Transverse colon (tissue), 4 donors: ENCODE measurements at regions of chr15 and their contacts with region 1.

Region 1: GRCh38 chr15:71730277-71731144 is 79.8 kb upstream of the NR2E3 start:
- DNase-seq: peak; percentile 44
- H3K4me3 ChIP-seq: no peak overlapping the region
- H3K27ac ChIP-seq: no peak overlapping the region
- H3K4me1 ChIP-seq: peaks cover 0 to 31% (median 7%) of the 10 kb centered on the region in 4 donors
- H3K27me3 ChIP-seq: no peaks in the 10 kb centered on the region
- CTCF ChIP-seq: peak; percentile 69 to 82 (median 75)
- EP300 ChIP-seq: no peak
- POLR2A ChIP-seq: no peak

Region 2: DNA sequence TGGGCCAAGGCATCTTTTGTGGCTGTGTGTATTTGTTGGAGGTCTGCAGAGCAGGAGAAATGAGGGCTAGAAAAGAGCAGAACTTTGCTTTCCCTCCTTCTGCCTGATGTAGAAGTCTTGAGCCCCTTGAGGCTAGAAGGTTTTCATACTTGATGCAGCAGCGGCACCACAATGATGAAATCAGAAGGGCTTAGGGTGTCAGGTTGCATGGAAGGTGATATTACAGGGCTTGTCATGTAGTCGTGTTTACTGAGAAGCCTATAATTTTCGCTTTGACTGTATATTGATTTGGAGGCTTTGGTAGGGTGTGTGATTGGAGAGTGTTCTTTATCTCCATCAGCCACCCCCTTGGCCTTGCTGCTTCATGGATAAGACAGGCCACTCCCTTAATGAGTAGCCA is 275.4 kb before region 1 on chr15:
- in situ Hi-C with region 1: loop called in 2 of 4 experiments (anchors 10 to 25 kb)
- intact Hi-C with region 1: no loop called
- DNase-seq: no peak
- H3K4me3 ChIP-seq: no peak overlapping the region
- H3K27ac ChIP-seq: no peak overlapping the region
- H3K4me1 ChIP-seq: peaks cover 0 to 13% (median 0%) of the 10 kb centered on the region in 4 donors
- H3K27me3 ChIP-seq: no peaks in the 10 kb centered on the region
- CTCF ChIP-seq: no peak
- EP300 ChIP-seq: no peak
- POLR2A ChIP-seq: no peak

Region 3: GRCh38 chr15:71471347-71471746 is 259.2 kb before region 1 on chr15:
- in situ Hi-C with region 1: loop called in 1 of 4 experiments (anchors 25 kb)
- intact Hi-C with region 1: no loop called
- DNase-seq: no peak
- H3K4me3 ChIP-seq: no peak overlapping the region
- H3K27ac ChIP-seq: no peak overlapping the region
- H3K4me1 ChIP-seq: no peaks in the 10 kb centered on the region
- H3K27me3 ChIP-seq: no peaks in the 10 kb centered on the region
- CTCF ChIP-seq: no peak
- EP300 ChIP-seq: no peak
- POLR2A ChIP-seq: no peak

Region 4: DNA sequence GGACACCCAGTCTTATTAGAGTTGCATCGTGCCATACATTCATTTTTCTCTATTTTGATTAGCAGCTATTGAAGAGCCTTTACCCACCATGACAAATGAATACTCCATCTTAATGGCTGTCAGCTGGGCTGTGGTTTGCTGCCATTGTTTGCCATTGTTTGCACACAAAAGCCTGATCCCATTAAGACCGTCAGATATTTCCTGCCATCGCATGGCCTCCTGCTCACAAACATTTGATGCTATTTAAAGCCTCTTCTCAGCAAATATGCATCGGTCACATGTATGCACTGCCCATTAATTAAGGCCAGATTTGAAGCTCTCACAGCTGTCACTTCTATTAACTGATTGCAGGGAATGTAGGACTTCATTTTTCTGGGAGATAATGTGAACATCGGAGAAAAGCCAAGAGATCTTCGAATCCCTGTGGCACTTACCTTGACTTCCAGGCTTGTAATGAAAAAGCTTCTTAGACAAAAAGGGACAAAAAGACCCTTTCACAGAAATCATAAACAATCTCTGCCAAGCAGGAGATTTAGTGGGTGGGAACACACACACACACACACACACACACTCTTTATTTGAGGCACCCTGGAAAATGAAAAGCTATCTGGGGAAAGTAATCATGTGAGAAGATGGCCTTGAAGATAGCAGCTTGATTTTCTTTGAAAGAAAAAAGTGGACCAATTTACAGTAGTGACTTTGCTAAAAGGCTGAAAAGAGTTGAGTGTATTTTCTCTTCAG is 95.5 kb before region 1 on chr15:
- in situ Hi-C with region 1: no loop called
- intact Hi-C with region 1: no loop called
- DNase-seq: no peak
- H3K4me3 ChIP-seq: no peak overlapping the region
- H3K27ac ChIP-seq: no peak overlapping the region
- H3K4me1 ChIP-seq: peaks cover 0 to 7% (median 1%) of the 10 kb centered on the region in 4 donors
- H3K27me3 ChIP-seq: no peaks in the 10 kb centered on the region
- CTCF ChIP-seq: no peak
- EP300 ChIP-seq: no peak
- POLR2A ChIP-seq: no peak

Region 5: DNA sequence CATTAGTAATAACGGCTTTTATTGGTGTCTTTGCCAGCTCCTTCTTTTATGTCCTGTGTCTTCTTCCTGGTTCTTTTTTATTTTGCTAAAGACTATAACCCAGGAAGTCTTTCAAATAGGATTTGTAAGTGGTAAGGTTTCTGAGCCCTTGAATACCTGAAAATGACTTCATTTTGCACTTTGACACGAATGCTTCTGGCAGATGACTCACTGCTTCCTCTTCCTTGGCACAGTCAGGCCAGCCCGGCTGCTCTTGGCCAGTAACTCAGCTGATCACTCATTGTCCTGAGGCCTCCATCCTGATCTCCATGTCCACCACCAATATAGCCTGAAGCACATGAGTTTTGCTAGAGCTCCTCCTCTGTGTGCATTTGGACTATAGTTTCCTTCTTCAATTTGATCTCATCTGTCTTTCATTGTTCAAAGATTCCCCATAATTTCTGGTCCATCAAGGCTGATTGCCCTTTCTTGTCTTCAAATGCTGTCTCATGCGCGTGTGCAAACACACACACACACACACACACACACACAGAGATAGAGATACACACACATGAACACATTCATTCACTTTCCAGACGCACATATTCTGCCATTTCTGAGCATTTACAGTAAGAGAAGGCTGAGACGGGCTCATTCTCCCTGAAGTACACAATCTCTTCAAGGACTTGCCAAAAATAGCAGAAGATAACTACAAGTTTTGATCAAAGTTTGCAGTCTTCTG is 31.3 kb after region 1 on chr15:
- in situ Hi-C with region 1: no loop called
- intact Hi-C with region 1: loop called (anchors 1 kb)
- DNase-seq: peak; percentile 71
- H3K4me3 ChIP-seq: no peak overlapping the region
- H3K27ac ChIP-seq: peak overlapping the region; percentile 32 to 70 (median 49)
- H3K4me1 ChIP-seq: peaks cover 8 to 38% (median 17%) of the 10 kb centered on the region in 4 donors
- H3K27me3 ChIP-seq: no peaks in the 10 kb centered on the region
- CTCF ChIP-seq: no peak
- EP300 ChIP-seq: no peak
- POLR2A ChIP-seq: no peak

Region 6: GRCh38 chr15:72770673-72771328 is 1040.3 kb after region 1 on chr15:
- in situ Hi-C with region 1: no loop called
- intact Hi-C with region 1: no loop called
- DNase-seq: no peak
- H3K4me3 ChIP-seq: no peak overlapping the region
- H3K27ac ChIP-seq: no peak overlapping the region
- H3K4me1 ChIP-seq: no peaks in the 10 kb centered on the region
- H3K27me3 ChIP-seq: no peaks in the 10 kb centered on the region
- CTCF ChIP-seq: no peak
- EP300 ChIP-seq: no peak
- POLR2A ChIP-seq: no peak